Activated CD4-positive, alpha-beta memory T cell treated with anti-CD3 and anti-CD28 coated beads for 36 hours (primary cell): ENCODE measurements at regions of chr5 and their contacts with region 1.

Region 1: DNA sequence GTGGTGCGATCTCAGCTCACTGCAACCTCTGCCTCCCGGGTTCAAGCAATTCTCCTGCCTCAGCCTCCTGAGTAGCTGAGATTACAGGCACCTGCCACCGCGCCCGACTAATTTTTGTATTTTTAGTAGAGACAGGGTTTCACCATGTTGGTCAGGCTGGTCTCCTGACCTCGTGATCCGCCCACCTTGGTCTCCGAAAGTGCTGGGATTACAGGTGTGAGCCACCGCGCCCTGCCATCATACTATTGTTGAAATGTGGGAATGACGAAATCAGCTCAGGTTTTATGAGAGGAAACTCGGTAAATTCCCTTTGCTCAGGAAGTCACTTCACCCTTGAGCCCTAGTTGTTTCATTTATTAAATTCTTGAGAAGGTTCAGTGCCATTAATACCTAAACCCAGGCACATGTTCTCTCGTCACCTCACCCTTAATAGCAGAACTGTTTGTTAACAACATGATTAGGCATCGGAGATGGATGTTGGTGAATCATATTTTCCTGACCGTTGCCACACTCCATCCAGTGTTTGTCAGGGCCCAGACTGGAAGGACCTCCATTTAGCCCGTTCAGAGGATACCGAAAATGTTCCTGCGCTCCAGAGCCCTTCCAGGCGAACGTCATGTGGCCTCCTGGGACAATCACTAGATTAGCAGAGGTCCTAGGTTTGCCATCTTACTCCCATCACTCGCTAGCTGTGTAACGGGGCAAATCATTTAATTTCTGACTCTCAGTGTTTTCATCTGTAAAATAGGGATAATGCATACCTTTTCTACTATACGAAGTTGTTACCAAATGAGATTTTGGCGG is 20.0 kb upstream of the CREBRF start:
- DNase-seq: peak; percentile 89
- H3K4me3 Mint-ChIP-seq: peak overlapping the region; percentile 78
- H3K27ac Mint-ChIP-seq: peak overlapping the region; percentile 98
- H3K4me1 Mint-ChIP-seq: peaks cover 64% of the 10 kb centered on the region
- H3K27me3 Mint-ChIP-seq: no peaks in the 10 kb centered on the region

Region 2: DNA sequence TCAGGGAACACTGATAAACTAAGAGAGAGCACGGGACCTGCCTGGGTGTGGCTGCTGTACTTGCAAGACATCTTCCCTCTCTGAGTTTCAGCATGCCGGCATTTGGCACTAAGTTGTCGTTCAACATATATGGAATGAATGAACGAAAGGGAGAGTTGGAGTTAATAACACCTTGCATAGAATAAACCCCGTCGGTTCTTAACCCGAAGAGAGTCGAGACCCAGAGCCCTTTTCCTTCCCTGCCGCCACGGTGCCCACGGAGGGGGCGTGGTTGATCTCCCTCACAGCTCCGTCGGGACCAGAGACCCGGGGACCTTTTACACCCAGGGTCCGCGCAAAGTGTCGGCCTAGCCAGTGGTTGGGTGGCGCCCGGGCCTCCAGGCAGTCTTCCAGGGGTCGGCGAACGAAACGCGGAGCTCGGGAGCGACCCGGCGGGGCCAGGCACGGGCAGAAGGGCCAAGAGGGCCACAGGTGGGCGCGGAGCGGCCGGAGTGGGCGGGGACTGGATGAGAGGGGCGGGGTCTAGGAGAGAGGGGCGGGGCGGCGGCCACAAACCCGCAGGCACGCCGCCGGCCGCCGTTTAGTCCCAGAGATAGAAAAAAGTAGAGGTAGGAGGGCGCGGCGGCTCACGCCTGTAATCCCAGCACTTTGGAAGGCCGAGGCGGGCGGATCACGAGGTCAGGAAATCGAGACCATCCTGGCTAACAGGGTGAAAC is 77.6 kb before region 1 on chr5:
- CTCF ChIA-PET with region 1: no interaction called
- POLR2A ChIA-PET with region 1: no interaction called
- intact Hi-C with region 1: loop called (anchors 2 kb)
- DNase-seq: peak; percentile 71
- H3K4me3 Mint-ChIP-seq: peak overlapping the region; percentile 98
- H3K27ac Mint-ChIP-seq: peak overlapping the region; percentile 83
- H3K4me1 Mint-ChIP-seq: peaks cover 18% of the 10 kb centered on the region
- H3K27me3 Mint-ChIP-seq: no peaks in the 10 kb centered on the region

Region 3: DNA sequence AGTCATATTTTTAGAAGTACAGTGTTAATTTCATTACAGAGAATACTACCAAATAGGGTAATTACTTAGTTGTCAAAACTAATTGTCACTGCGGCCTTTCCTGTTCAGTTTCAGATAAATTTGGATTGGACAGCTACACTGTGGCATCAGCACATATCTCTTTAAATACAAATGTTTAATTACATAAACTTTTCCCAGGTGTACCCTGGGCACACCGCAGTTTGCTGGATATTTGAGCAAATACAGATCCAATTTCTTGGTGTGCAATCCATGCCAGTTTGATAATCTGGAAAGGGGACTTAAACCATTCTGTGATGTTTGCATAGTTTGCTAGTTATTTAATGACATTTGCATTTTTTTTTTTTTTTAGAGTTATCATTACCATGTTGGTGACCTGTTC is 41.7 kb before region 1 on chr5:
- CTCF ChIA-PET with region 1: no interaction called
- POLR2A ChIA-PET with region 1: interaction called, 5 read pairs
- intact Hi-C with region 1: loop called (anchors 2 kb)
- DNase-seq: no peak
- H3K4me3 Mint-ChIP-seq: no peak overlapping the region
- H3K27ac Mint-ChIP-seq: no peak overlapping the region
- H3K4me1 Mint-ChIP-seq: peaks cover 43% of the 10 kb centered on the region
- H3K27me3 Mint-ChIP-seq: no peaks in the 10 kb centered on the region

Region 4: DNA sequence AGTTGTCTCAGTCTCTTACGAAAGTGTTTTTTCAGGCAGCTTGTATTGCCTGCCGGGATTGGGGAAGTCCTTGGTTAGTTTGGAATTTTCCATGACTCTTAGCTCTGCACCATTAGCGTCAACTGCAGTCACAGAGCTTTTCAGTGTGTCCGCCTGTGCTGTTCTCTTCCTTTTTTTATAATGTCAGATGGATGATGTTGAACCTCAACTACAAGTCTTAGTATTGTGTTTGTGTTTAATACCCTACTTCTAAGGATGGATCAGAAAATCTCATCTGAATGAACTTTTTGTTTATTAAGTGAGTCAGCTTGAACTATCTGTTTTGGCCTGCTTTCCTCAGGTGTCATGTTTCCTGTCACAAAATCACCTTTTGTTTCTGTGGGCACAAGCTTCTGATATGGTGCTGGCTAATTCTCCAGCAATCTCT is 19.5 kb before region 1 on chr5:
- CTCF ChIA-PET with region 1: interaction called, 4 read pairs
- POLR2A ChIA-PET with region 1: interaction called, 9 read pairs
- intact Hi-C with region 1: loop called (anchors 1 kb)
- DNase-seq: no peak
- H3K4me3 Mint-ChIP-seq: no peak overlapping the region
- H3K27ac Mint-ChIP-seq: peak overlapping the region; percentile 74
- H3K4me1 Mint-ChIP-seq: peaks cover 31% of the 10 kb centered on the region
- H3K27me3 Mint-ChIP-seq: no peaks in the 10 kb centered on the region

Region 5: DNA sequence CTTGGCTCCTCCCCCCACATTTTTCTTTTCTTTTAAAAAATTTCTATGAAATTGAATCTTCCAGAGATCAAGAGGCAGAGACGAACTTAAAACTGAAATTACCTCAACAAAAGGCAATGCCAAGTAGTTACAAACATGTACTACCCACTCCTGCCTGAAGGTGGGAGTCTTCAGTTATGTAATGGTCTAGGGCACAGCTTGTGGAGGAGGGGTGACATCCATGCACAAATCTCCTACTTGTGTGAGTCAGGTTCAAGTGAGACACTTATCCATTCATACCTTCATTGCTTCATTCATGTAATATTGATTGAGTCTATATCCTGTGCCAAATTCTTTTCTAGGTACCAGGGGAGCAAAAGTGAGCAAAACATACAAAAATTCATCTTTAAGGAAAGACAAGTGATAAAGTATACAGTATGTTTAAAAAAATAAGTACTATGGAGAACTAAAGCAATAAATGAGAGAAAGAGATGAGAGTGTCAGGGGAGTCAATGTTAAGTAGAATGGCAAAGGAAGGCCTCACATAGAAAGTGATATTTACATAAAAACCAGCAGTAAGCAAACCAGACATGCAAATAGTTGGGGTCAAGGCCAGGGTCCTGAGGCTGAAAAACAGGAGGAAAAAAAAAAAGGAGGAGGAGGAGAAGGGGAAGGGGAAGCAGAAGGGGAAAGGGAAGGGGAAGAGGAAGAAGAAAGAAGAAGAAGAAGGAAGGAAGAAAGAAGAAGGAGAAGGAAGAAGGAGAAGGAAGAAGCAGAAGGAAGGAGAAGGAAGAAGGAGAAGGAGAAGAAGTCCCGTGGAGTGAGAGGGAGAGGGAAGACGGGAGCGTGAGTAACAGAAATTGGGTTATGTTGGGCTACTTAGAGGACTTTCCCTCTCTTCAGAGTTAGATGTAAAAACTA is 984.5 kb after region 1 on chr5:
- CTCF ChIA-PET with region 1: no interaction called
- POLR2A ChIA-PET with region 1: no interaction called
- intact Hi-C with region 1: no loop called
- DNase-seq: peak; percentile 17
- H3K4me3 Mint-ChIP-seq: no peak overlapping the region
- H3K27ac Mint-ChIP-seq: no peak overlapping the region
- H3K4me1 Mint-ChIP-seq: no peaks in the 10 kb centered on the region
- H3K27me3 Mint-ChIP-seq: peaks cover 30% of the 10 kb centered on the region